ENCODE measurements at regions of chr2 and their contacts with region 1.

Region 1: DNA sequence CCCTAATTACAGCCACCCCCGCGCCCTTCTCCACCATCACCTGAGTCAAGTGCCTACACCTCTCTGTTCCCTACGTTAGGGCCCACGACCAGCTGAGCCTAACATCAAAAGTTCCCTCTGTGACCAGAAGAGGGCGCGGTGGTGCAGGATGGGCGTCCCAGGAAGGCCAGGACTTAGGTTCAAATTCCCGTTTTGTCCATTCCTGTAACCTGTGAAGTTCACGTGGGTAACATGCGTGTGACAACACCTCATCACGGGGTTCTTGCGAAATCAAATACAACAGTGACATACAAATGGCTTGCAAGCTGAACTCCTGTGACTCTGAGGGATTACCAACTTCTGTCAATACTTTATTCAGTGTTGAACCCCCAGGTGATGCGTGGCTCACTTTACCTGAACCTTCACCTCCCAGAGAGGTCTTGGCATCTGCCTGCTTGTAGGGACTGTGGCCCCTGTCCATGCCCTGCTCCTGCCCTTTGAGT is 207.9 kb downstream of the ARL4C start:
- DNase-seq: peak; percentile 75
- ATAC-seq: peak; percentile 90
- H3K4me3 ChIP-seq: no peak overlapping the region
- H3K27ac ChIP-seq: no peak overlapping the region
- H3K4me1 ChIP-seq: no peaks in the 10 kb centered on the region
- H3K27me3 ChIP-seq: no peaks in the 10 kb centered on the region
- CTCF ChIP-seq: peak; percentile 92
- EP300 ChIP-seq: peak in 1 of 2 experiments; percentile 34; a peak in 1 of 4 replicates
- POLR2A ChIP-seq: no peak
- RAD21 ChIP-seq: peak; percentile 73

Region 2: DNA sequence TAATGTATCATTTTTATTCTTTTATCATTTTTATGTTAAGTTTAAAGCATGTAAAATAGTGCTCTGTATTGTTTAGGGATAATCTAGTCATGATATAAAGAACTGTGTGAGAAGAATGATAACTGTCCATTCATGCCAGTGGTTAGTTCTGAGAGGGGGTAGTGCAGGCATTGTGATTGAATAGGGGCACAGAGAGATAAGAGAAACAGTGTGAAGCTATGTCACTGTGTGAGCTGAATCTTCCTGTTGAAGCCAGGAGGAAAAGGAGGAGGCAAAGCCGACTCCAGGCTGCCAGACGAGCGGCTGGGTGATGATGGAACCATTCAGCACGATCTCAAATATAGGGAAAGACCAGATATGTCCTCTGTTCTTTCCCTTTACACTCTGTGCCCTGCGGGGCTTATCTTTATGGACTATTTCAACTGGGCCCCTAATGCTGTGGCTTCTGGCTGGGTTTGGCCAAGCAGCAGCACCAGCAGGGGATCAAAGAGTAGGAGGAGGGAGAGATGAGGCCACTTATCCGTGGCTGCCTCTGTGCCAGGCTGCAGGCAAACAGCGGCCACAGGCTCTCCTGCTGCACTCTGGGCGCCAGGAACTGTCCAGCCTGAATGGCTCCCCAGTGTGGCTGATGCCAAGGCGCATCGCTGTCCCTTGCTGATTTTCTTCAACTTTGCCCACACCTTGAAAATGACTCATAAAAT is 110.5 kb before region 1 on chr2:
- CTCF ChIA-PET with region 1: no interaction called
- POLR2A ChIA-PET with region 1: no interaction called
- in situ Hi-C with region 1: no loop called
- intact Hi-C with region 1: no loop called
- DNase-seq: no peak
- ATAC-seq: peak; percentile 52; the same call in 1 of the 3 replicates
- H3K4me3 ChIP-seq: no peak overlapping the region
- H3K27ac ChIP-seq: no peak overlapping the region
- H3K4me1 ChIP-seq: no peaks in the 10 kb centered on the region
- H3K27me3 ChIP-seq: 0 out of 5 replicates have a peak, but pooled peaks cover 0 to 10% of the 10 kb centered on the region in 2 experiments
- CTCF ChIP-seq: no peak
- EP300 ChIP-seq: no peak
- POLR2A ChIP-seq: no peak
- RAD21 ChIP-seq: no peak

Region 3: DNA sequence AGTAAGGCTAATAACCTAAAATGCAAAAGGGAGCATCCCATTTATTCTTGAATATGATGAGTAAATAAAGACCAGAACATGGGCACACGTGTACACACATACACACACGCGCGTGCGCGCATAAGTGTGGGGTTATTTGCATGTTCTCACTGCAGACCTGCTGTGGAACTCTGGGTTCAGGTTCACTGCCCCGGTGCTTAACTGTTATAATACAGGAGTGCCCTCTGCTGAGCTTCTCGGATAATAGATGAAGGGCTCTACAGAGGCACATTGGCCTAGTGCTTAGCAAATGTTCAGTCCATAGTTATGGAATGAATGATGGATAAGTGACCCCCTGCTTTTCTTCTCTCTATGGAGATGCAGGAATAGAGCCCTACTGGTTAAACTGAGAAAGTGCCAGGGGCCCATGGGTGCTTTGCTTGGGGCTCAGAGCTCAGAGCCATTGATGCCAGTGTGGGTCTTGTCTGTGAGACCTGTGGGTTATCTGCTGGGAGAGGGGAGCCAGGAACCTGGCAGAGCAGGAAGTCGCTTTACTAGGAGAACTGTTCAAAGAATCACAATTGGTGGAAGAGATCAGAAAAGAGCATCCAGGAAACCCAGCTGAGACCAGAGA is 211.5 kb after region 1 on chr2:
- CTCF ChIA-PET with region 1: interaction called, 25 read pairs
- POLR2A ChIA-PET with region 1: no interaction called
- in situ Hi-C with region 1: loop called (anchors 5 kb)
- intact Hi-C with region 1: loop called (anchors 1 kb)
- DNase-seq: peak; percentile 66
- ATAC-seq: peak; percentile 75
- H3K4me3 ChIP-seq: no peak overlapping the region
- H3K27ac ChIP-seq: no peak overlapping the region
- H3K4me1 ChIP-seq: peaks cover 7% of the 10 kb centered on the region
- H3K27me3 ChIP-seq: peaks cover 9 to 14% of the 10 kb centered on the region in 2 experiments
- CTCF ChIP-seq: peak; percentile 81
- EP300 ChIP-seq: no peak
- POLR2A ChIP-seq: no peak
- RAD21 ChIP-seq: peak; percentile 86

Region 4: GRCh38 chr2:234544659-234545611 is 255.9 kb after region 1 on chr2:
- CTCF ChIA-PET with region 1: interaction called, 5 read pairs
- POLR2A ChIA-PET with region 1: no interaction called
- in situ Hi-C with region 1: no loop called
- intact Hi-C with region 1: loop called (anchors 5 kb)
- DNase-seq: peak; percentile 44
- ATAC-seq: peak; percentile 91
- H3K4me3 ChIP-seq: no peak overlapping the region; a peak in 1 of 6 replicates
- H3K27ac ChIP-seq: no peak overlapping the region
- H3K4me1 ChIP-seq: peaks cover 19% of the 10 kb centered on the region
- H3K27me3 ChIP-seq: peaks cover 4 to 54% of the 10 kb centered on the region in 2 experiments; a peak in 4 of 5 replicates
- CTCF ChIP-seq: peak; percentile 95
- EP300 ChIP-seq: no peak
- POLR2A ChIP-seq: no peak
- RAD21 ChIP-seq: peak; percentile 76

Region 5: GRCh38 chr2:235116885-235117492 is 828.0 kb after region 1 on chr2:
- CTCF ChIA-PET with region 1: interaction called, 15 read pairs
- POLR2A ChIA-PET with region 1: no interaction called
- in situ Hi-C with region 1: loop called (anchors 10 kb)
- intact Hi-C with region 1: loop called (anchors 1 kb)
- DNase-seq: peak; percentile 50
- ATAC-seq: no peak
- H3K4me3 ChIP-seq: no peak overlapping the region
- H3K27ac ChIP-seq: no peak overlapping the region
- H3K4me1 ChIP-seq: no peaks in the 10 kb centered on the region
- H3K27me3 ChIP-seq: peaks cover 0 to 11% of the 10 kb centered on the region in 2 experiments; a peak in 2 of 5 replicates
- CTCF ChIP-seq: peak; percentile 63
- EP300 ChIP-seq: no peak
- POLR2A ChIP-seq: no peak
- RAD21 ChIP-seq: peak; percentile 68